ENCODE measurements at regions of chr12 and their contacts with region 1.

Region 1: DNA sequence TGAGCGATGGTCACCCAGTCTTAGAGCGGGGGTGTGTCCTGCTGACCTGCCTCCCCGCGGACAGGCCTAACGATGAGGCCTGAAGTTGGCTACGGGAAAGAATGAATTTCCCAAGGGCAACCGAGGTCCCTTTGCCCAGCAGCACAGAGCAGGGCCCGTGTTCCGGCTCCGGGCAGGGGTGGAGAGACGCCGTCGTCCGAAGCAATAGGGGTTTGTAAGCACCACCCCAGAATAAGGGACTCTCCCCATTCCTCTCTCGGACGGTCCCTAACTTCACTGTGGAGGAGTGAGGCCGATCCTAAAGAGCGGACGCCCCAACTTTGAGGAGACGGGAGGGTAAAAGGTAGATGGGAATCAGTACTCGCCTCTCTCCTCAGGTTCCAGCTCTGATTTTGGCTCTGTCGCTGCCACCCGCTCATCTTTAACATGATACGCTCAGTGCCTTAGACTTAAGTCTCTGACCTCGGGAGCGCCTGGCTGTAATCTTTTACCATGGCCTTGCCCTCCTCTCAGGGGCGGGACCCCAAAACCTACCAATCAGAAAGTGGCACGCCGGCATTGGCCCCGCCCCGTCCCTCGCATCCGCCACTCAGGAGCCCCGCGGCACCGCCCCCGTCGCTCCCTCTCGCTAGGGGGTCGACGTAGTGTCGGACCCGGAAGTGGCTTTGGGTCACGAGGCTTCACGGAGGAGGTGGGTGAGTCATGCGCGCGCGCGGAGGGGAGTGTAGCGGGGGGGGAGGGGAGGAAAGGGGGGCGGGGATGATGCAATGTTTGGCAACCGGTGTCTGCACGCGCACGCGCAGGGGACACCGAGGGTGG is at the start of gene DDIT3:
- DNase-seq: peak; percentile 99
- ATAC-seq: peak; percentile 75
- H3K4me3 Mint-ChIP-seq: peak within 1 kb of the TSS; percentile 86
- H3K27ac Mint-ChIP-seq: peak within 1 kb of the TSS; percentile 100
- H3K4me1 Mint-ChIP-seq: peaks cover 60% of the 10 kb centered on the region
- H3K27me3 Mint-ChIP-seq: no peaks in the 10 kb centered on the region
- total RNA-seq, gene DDIT3: 14.9 to 15.0 TPM

Region 2: GRCh38 chr12:57441846-57442427 is 78.3 kb before region 1 on chr12:
- CTCF ChIA-PET with region 1: no interaction called
- POLR2A ChIA-PET with region 1: no interaction called
- DNase-seq: no peak
- ATAC-seq: no peak
- H3K4me3 Mint-ChIP-seq: no peak overlapping the region
- H3K27ac Mint-ChIP-seq: no peak overlapping the region
- H3K4me1 Mint-ChIP-seq: no peaks in the 10 kb centered on the region
- H3K27me3 Mint-ChIP-seq: peaks cover 10% of the 10 kb centered on the region

Region 3: GRCh38 chr12:57476162-57476992 is 43.9 kb before region 1 on chr12:
- CTCF ChIA-PET with region 1: interaction called, 11 read pairs
- POLR2A ChIA-PET with region 1: interaction called, 74 read pairs
- DNase-seq: peak; percentile 79
- ATAC-seq: peak; percentile 13
- H3K4me3 Mint-ChIP-seq: peak overlapping the region; percentile 96
- H3K27ac Mint-ChIP-seq: peak overlapping the region; percentile 99
- H3K4me1 Mint-ChIP-seq: peaks cover 79% of the 10 kb centered on the region
- H3K27me3 Mint-ChIP-seq: no peaks in the 10 kb centered on the region

Region 4: GRCh38 chr12:57487597-57488401 is 32.5 kb before region 1 on chr12 and contains the start of gene MARS1:
- CTCF ChIA-PET with region 1: no interaction called
- POLR2A ChIA-PET with region 1: interaction called, 10 read pairs
- DNase-seq: peak; percentile 96
- ATAC-seq: peak; percentile 97
- H3K4me3 Mint-ChIP-seq: peak within 1 kb of the TSS; percentile 89
- H3K27ac Mint-ChIP-seq: peak within 1 kb of the TSS; percentile 93
- H3K4me1 Mint-ChIP-seq: peaks cover 41% of the 10 kb centered on the region
- H3K27me3 Mint-ChIP-seq: no peaks in the 10 kb centered on the region
- total RNA-seq, gene MARS1: 275 to 291 TPM

Region 5: GRCh38 chr12:57498132-57498502 is 22.1 kb before region 1 on chr12:
- CTCF ChIA-PET with region 1: interaction called, 3 read pairs
- POLR2A ChIA-PET with region 1: interaction called, 20 read pairs
- DNase-seq: no peak
- ATAC-seq: no peak
- H3K4me3 Mint-ChIP-seq: no peak overlapping the region
- H3K27ac Mint-ChIP-seq: no peak overlapping the region
- H3K4me1 Mint-ChIP-seq: peaks cover 2% of the 10 kb centered on the region
- H3K27me3 Mint-ChIP-seq: no peaks in the 10 kb centered on the region

Region 6: GRCh38 chr12:57539134-57539768 is 19.0 kb after region 1 on chr12:
- CTCF ChIA-PET with region 1: interaction called, 6 read pairs
- POLR2A ChIA-PET with region 1: interaction called, 29 read pairs
- DNase-seq: no peak
- ATAC-seq: no peak
- H3K4me3 Mint-ChIP-seq: no peak overlapping the region
- H3K27ac Mint-ChIP-seq: peak overlapping the region; percentile 22
- H3K4me1 Mint-ChIP-seq: peaks cover 13% of the 10 kb centered on the region
- H3K27me3 Mint-ChIP-seq: no peaks in the 10 kb centered on the region

Region 7: GRCh38 chr12:57546438-57547383 is 26.4 kb after region 1 on chr12 and contains the start of gene DCTN2:
- CTCF ChIA-PET with region 1: interaction called, 7 read pairs
- POLR2A ChIA-PET with region 1: interaction called, 11 read pairs
- DNase-seq: peak; percentile 98
- ATAC-seq: peak; percentile 98
- H3K4me3 Mint-ChIP-seq: peak within 1 kb of the TSS; percentile 100
- H3K27ac Mint-ChIP-seq: peak within 1 kb of the TSS; percentile 97
- H3K4me1 Mint-ChIP-seq: peaks cover 53% of the 10 kb centered on the region
- H3K27me3 Mint-ChIP-seq: peaks cover 9% of the 10 kb centered on the region
- total RNA-seq, gene DCTN2: 89.3 to 96.5 TPM

Measured in activated CD8-positive, alpha-beta T cell treated with anti-CD3 and anti-CD28 coated beads, Interleukin-2, amount 10 ng/mL, durations not matched to agents 7 days and 5 days (primary cell).